ENCODE measurements at regions of chr19 and their contacts with region 1.

Region 1: DNA sequence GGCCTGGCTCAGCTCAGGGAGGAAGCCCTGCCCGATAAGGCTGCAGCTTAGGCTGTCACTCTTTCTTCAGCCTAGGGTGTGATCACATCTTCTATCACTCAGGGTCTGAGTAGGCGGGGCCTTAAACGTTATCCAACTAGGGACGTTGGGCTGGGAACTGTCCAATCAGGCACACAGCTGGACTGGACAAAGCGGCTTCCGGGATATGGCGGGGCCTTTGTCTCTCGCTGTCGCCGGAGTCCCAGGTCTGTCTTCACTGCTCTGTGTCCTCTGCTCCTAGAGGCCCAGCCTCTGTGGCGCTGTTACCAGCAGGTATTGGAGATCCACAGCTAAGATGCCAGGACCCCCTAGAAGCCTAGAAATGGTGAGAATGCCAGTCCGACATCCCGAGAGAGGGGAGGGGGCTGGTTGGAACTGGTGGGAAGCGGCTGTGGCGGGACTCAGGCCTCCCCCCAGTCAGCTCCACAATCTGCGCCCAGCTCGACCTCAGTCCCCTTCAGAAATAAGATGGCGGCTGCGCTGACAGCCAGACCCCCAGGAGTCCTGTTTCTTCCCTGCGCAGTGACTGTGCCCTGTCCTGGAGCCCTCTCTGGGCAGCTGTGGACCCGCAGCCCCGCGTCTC is at the start of gene ZNF254:
- DNase-seq: peak; percentile 81
- ATAC-seq: peak; percentile 100
- H3K4me3 Mint-ChIP-seq: peak within 1 kb of the TSS; percentile 97
- H3K27ac Mint-ChIP-seq: peak within 1 kb of the TSS; percentile 99
- H3K4me1 Mint-ChIP-seq: peaks cover 6% of the 10 kb centered on the region
- H3K27me3 Mint-ChIP-seq: no peaks in the 10 kb centered on the region
- total RNA-seq, gene ZNF254: 17.5 to 19.0 TPM

Region 2: DNA sequence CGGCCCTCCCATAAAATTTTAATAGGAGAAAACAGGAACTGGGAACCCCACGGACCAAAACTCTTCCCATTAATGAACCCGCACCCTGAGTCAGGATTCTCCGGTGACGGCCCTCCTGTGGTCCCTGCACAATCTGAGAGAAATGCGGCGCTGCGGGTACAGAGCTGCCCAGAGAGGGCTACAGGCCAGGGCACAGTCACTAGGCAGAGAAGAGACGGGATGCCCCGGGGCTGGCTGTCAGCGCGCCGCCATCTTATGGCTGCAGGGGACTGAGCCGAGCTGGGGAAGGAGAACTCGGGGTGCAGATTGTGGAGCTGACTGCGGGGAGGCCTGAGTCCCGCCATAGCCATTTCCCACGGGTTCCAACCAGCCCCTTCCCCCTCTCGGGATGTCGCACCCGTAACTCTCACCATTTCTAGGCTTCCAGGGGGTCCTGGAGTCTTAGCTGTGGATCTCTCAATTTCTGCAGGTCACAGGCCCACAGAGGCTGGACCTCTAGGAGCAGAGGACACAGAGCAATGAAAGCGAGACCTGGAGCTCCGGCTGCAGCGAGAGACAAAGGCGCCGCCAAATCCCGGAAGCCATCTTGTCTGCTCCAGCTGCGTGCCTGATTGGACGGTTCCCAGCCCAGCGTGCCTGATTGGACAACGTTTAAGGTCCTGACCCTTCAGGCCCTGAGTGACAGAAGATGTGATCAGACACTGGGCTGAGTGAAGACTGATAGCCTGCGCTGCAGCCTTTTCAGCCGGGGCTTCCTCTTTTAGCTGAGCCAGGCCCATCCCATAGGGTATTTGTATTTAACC is 400.3 kb before region 1 on chr19 and contains the start of gene ZNF675:
- POLR2A ChIA-PET with region 1: interaction called, 14 read pairs
- DNase-seq: peak; percentile 83
- ATAC-seq: peak; percentile 93
- H3K4me3 Mint-ChIP-seq: peak within 1 kb of the TSS; percentile 98
- H3K27ac Mint-ChIP-seq: peak within 1 kb of the TSS; percentile 99
- H3K4me1 Mint-ChIP-seq: peaks cover 13% of the 10 kb centered on the region
- H3K27me3 Mint-ChIP-seq: no peaks in the 10 kb centered on the region
- total RNA-seq, gene ZNF675: 29.6 to 30.5 TPM

Region 3: GRCh38 chr19:24033301-24033962 is 53.7 kb before region 1 on chr19:
- POLR2A ChIA-PET with region 1: interaction called, 30 read pairs
- DNase-seq: peak; percentile 78
- ATAC-seq: peak; percentile 99
- H3K4me3 Mint-ChIP-seq: peak overlapping the region; percentile 98
- H3K27ac Mint-ChIP-seq: peak overlapping the region; percentile 98
- H3K4me1 Mint-ChIP-seq: peaks cover 20% of the 10 kb centered on the region
- H3K27me3 Mint-ChIP-seq: no peaks in the 10 kb centered on the region

Region 4: GRCh38 chr19:24046550-24046949 is 40.5 kb before region 1 on chr19:
- POLR2A ChIA-PET with region 1: no interaction called
- DNase-seq: no peak
- ATAC-seq: no peak
- H3K4me3 Mint-ChIP-seq: no peak overlapping the region
- H3K27ac Mint-ChIP-seq: no peak overlapping the region
- H3K4me1 Mint-ChIP-seq: peaks cover 1% of the 10 kb centered on the region
- H3K27me3 Mint-ChIP-seq: no peaks in the 10 kb centered on the region

Region 5: GRCh38 chr19:24074720-24075454 is 12.2 kb before region 1 on chr19:
- POLR2A ChIA-PET with region 1: no interaction called
- DNase-seq: no peak
- ATAC-seq: no peak
- H3K4me3 Mint-ChIP-seq: no peak overlapping the region
- H3K27ac Mint-ChIP-seq: no peak overlapping the region
- H3K4me1 Mint-ChIP-seq: peaks cover 5% of the 10 kb centered on the region
- H3K27me3 Mint-ChIP-seq: no peaks in the 10 kb centered on the region